Endothelial cell of umbilical vein (primary cell): ENCODE measurements at regions of chr6 and their contacts with region 1.

Region 1: GRCh38 chr6:42547407-42548329 is 16.2 kb upstream of the UBR2 start:
- DNase-seq: peak; percentile 87
- H3K4me3 ChIP-seq: peak overlapping the region; percentile 37 to 84 (median 47)
- H3K27ac ChIP-seq: peak overlapping the region; percentile 5
- H3K4me1 ChIP-seq: peaks cover 2% of the 10 kb centered on the region
- H3K27me3 ChIP-seq: peaks cover 0 to 2% of the 10 kb centered on the region in 2 experiments
- CTCF ChIP-seq: peak; percentile 99 to 100
- POLR2A ChIP-seq: no peak

Region 2: GRCh38 chr6:42175860-42176259 is 371.8 kb before region 1 on chr6:
- CTCF ChIA-PET with region 1: interaction called, 10 read pairs
- POLR2A ChIA-PET with region 1: no interaction called
- dilution Hi-C with region 1: no loop called
- intact Hi-C with region 1: no loop called
- DNase-seq: no peak
- H3K4me3 ChIP-seq: no peak overlapping the region
- H3K27ac ChIP-seq: no peak overlapping the region
- H3K4me1 ChIP-seq: no peaks in the 10 kb centered on the region
- H3K27me3 ChIP-seq: peaks cover 2 to 6% of the 10 kb centered on the region in 2 experiments
- CTCF ChIP-seq: peak in 1 of 2 donors; percentile 21
- POLR2A ChIP-seq: no peak

Region 3: GRCh38 chr6:42279144-42279781 is 268.4 kb before region 1 on chr6:
- CTCF ChIA-PET with region 1: interaction called, 26 read pairs
- POLR2A ChIA-PET with region 1: no interaction called
- dilution Hi-C with region 1: no loop called
- intact Hi-C with region 1: no loop called
- DNase-seq: no peak
- H3K4me3 ChIP-seq: no peak overlapping the region
- H3K27ac ChIP-seq: no peak overlapping the region
- H3K4me1 ChIP-seq: peaks cover 13% of the 10 kb centered on the region
- H3K27me3 ChIP-seq: no peaks in the 10 kb centered on the region
- CTCF ChIP-seq: no peak
- POLR2A ChIP-seq: no peak

Region 4: GRCh38 chr6:42453031-42453653 is 94.5 kb before region 1 on chr6:
- CTCF ChIA-PET with region 1: interaction called, 18 read pairs
- POLR2A ChIA-PET with region 1: interaction called, 5 read pairs
- dilution Hi-C with region 1: no loop called
- intact Hi-C with region 1: loop called (anchors 5 kb)
- DNase-seq: peak; percentile 52
- H3K4me3 ChIP-seq: peak overlapping the region; percentile 49 to 73 (median 51)
- H3K27ac ChIP-seq: no peak overlapping the region
- H3K4me1 ChIP-seq: peaks cover 9% of the 10 kb centered on the region
- H3K27me3 ChIP-seq: peaks cover 11 to 37% of the 10 kb centered on the region in 2 experiments
- CTCF ChIP-seq: no peak
- POLR2A ChIP-seq: no peak

Region 5: GRCh38 chr6:42532038-42532669 is 15.5 kb before region 1 on chr6:
- CTCF ChIA-PET with region 1: interaction called, 117 read pairs
- POLR2A ChIA-PET with region 1: no interaction called
- dilution Hi-C with region 1: no loop called
- intact Hi-C with region 1: no loop called
- DNase-seq: peak; percentile 37
- H3K4me3 ChIP-seq: no peak overlapping the region
- H3K27ac ChIP-seq: no peak overlapping the region
- H3K4me1 ChIP-seq: no peaks in the 10 kb centered on the region
- H3K27me3 ChIP-seq: peaks cover 0 to 2% of the 10 kb centered on the region in 2 experiments
- CTCF ChIP-seq: peak; percentile 70 to 76
- POLR2A ChIP-seq: no peak

Region 6: DNA sequence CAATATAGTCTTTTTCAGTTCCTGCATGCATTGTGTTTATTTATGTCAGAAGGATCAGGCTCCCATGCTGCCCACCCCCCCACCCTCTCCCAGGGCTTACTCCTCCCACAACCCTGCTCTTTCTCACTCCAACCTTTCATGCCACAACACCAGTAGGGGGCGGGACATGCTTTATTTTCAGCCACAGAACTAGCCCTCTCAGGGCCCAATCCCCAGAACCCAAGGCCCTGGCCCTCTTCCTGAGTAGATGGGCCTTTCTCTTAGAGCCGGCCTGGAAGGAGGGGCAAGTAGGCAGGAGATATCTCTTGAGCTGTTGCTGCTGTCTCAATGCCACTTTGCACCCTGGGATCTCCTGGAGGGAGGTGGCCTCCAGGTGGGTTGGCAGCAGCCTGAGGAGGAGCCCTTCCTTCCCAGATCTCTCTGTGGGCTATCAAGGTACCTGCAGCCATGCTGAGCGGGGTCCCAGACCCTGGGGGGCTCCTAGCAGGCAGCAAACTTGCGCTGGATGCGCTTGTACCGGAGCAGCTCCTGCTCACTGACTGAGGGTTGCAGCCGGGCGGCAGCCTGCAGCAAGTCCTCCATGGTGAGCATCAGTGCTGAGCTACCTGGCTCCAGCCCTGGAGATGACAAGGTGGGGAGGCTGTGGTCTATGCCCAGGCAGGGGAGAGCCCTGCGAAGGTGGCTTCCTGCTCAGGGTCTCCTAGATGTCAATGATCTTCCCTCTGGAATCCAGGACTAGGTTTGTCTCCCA is 416.4 kb after region 1 on chr6:
- CTCF ChIA-PET with region 1: no interaction called
- POLR2A ChIA-PET with region 1: no interaction called
- dilution Hi-C with region 1: no loop called
- intact Hi-C with region 1: no loop called
- DNase-seq: peak; percentile 50
- H3K4me3 ChIP-seq: no peak overlapping the region
- H3K27ac ChIP-seq: no peak overlapping the region
- H3K4me1 ChIP-seq: peaks cover 10% of the 10 kb centered on the region
- H3K27me3 ChIP-seq: no peaks in the 10 kb centered on the region
- CTCF ChIP-seq: peak; percentile 8 to 31
- POLR2A ChIP-seq: no peak